Right ventricle myocardium inferior (tissue), 1 donor: ENCODE measurements at regions of chr11 and their contacts with region 1.

Region 1: GRCh38 chr11:120335908-120336640 is at the start of gene ARHGEF12:
- DNase-seq: peak; percentile 96
- ATAC-seq: peak; percentile 84
- total RNA-seq, gene ARHGEF12: 81.7 TPM

Region 2: GRCh38 chr11:120375076-120375475 is 39.0 kb after region 1 on chr11:
- intact Hi-C with region 1: loop called (anchors 5 kb)
- DNase-seq: no peak
- ATAC-seq: no peak

Region 3: GRCh38 chr11:120400564-120401364 is 64.7 kb after region 1 on chr11:
- intact Hi-C with region 1: loop called (anchors 2 kb)
- DNase-seq: no peak
- ATAC-seq: peak; percentile 59

Region 4: DNA sequence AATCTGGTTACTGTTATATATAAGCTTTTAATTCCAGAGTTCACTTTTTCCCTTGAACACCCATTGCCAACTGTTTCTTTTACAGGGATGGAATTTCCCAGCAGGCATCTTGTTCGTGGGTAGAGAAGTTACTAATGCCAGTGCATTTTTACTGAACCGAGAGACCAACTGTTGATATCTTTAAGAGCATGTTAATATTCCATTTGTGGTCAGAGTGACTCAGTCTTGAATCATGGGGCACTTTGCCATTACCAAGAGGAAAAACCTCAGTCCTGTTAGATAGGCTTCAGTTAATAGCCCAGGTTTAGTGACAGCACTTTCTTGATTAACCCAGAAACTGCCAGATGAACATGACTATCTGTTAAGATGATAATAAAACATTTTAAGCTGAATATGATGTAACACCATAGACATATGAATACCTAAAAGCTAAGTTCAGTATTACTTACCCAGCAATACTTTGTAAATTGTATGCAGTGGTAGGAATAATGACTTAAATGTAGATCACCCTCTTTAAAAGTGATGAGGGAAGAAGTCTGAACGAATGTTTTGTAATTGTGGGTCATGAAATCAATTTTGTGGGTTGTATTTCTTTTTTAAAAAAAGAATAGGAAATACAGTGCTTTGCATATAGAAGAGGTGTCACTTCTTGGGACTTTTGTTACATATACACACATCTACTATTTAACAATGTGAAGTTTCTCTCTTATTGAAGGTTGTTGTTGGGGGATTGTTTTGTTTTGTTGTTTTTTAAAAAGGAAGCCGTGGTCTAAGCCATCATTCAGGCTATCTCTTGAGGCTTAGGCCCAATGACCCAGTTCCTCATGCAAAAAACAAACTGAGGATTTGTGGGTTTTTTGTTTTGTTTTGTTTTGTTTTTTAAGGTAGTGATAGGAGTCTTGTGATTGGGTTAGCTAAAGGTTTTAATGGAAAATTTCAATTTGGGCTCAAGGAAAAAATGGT is 96.3 kb after region 1 on chr11:
- intact Hi-C with region 1: loop called (anchors 2 kb)
- DNase-seq: no peak
- ATAC-seq: peak; percentile 86

Region 5: DNA sequence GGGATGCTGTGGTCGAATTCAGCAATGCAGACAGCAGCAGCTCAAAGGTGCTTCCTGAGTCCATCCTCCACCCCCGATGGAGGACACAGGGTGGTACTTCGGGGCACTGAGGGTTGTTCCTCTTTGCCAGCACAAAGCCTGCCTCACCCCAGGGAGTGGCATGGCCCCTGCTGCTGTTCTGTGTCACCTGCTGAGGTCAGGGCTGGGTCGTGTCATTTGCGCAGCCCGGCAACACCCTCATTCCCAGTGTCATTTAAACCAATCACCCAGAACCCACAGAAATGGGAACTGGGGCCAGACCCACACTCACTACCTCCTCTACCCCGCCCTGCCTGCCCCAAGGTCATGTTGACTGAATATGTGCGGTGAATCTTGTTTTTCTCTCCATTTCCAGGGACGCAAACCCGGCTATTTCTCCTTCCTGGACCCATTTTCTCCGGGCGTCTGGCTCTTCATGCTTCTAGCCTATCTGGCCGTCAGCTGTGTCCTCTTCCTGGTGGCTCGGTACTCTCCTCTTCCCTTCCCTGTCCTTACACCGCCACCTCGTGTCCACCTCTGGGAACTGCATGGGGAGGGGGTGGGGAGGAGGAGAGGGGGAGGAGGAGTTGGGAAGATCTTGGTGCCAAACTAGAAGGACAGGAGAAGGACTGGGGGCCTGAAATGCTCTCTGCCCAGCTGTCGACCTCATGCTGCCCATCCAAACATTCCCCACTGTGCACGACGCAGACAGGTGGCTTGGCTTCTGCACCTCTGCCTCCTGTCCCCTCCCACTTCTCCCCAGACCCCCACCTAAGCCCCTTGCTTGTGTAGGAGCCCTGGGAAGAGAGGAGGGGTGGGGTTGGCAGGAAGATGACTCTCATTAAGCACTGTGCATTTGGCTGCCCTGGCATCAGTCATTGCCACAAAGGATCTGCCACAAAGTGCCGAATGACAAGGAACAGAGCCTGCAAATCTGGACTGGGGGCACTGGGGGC is 616.7 kb after region 1 on chr11:
- intact Hi-C with region 1: loop called (anchors 10 kb)
- DNase-seq: peak; percentile 85
- ATAC-seq: peak; percentile 94